ENCODE measurements at regions of chr5 and their contacts with region 1.

Region 1: GRCh38 chr5:93078082-93079038 is 502.7 kb downstream of the NR2F1-AS1 start:
- DNase-seq: peak; percentile 99
- ATAC-seq: peak; percentile 96
- H3K4me3 ChIP-seq: peak overlapping the region in 1 of 2 experiments; percentile 16; a peak in 2 of 4 replicates
- H3K27ac ChIP-seq: peak overlapping the region; percentile 98
- H3K4me1 ChIP-seq: peaks cover 40 to 41% of the 10 kb centered on the region in 2 experiments
- H3K27me3 ChIP-seq: no peaks in the 10 kb centered on the region
- CTCF ChIP-seq: no peak
- POLR2A ChIP-seq: no peak
- RAD21 ChIP-seq: peak; percentile 35

Region 2: DNA sequence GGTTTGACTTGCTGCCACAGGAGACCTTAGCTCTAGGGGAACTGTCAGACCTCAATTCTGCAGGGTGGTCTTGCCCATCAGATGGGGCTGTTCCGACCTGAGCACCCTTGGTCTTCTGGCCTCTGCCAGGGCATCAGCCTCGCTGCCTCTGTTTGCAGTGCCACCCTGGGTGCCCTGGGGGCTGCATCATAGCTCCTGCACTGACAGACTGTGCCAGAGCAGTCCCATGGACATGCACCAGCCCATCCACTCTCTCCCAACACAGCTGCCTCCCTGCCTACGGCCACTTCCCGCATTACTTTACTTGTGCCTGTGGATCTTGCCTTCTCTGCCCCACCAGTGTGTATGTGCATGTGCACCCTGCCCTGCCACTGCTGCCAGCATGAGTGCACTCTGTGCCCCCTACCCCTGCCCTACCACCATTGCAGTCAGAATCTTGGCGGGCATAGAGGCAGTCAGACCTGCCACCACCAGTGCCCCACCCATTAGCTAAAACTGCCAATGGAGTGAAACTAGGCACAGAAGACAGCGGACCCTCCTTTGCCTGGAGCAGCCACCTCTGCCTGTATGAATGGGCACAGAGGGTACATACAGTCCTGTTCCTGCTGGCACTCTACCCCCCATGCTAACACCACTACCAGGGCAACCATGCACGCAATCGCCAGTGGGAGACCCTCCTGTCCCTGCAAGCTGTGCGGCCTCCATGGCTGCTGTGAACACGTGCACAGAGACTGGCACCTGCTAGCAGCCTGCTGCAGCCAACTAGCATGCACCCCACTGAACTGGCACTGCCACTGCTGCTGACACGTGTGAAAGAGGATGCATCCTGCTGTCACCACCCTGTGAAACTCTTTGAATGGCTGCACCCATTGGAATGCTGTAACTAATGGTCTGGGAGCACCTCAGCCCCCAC is 810.3 kb before region 1 on chr5:
- CTCF ChIA-PET with region 1: no interaction called
- POLR2A ChIA-PET with region 1: no interaction called
- RAD21 ChIA-PET with region 1: no interaction called
- intact Hi-C with region 1: no loop called
- DNase-seq: no peak
- ATAC-seq: no peak
- H3K4me3 ChIP-seq: no peak overlapping the region
- H3K27ac ChIP-seq: no peak overlapping the region
- H3K4me1 ChIP-seq: no peaks in the 10 kb centered on the region
- H3K27me3 ChIP-seq: no peaks in the 10 kb centered on the region
- CTCF ChIP-seq: no peak
- POLR2A ChIP-seq: no peak
- RAD21 ChIP-seq: no peak

Region 3: DNA sequence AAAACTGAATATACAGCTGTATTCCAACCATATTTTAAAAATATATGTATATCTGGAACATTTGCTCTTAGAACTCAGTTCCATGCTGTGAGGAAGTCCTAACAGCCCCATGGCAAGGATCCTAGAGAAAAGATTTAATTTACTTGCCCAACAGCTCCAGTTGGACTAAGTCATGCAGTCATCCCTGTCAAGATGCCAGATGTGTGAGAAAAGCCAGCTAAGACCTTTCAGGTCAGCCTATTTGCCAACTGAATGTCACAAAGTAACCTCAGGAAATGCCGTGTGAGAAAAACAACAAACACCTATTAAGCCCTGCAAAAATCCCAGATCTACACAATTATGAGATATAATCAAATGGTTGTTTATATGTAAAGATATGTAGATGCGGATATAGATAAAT is 86.3 kb after region 1 on chr5:
- CTCF ChIA-PET with region 1: no interaction called
- POLR2A ChIA-PET with region 1: no interaction called
- RAD21 ChIA-PET with region 1: no interaction called
- intact Hi-C with region 1: loop called (anchors 1 kb)
- DNase-seq: peak; percentile 87
- ATAC-seq: 0 out of 2 replicates have a peak, but pooled peaks have one; percentile 28
- H3K4me3 ChIP-seq: no peak overlapping the region
- H3K27ac ChIP-seq: peak overlapping the region; percentile 95
- H3K4me1 ChIP-seq: peaks cover 55 to 62% of the 10 kb centered on the region in 2 experiments
- H3K27me3 ChIP-seq: no peaks in the 10 kb centered on the region
- CTCF ChIP-seq: no peak
- POLR2A ChIP-seq: no peak
- RAD21 ChIP-seq: peak; percentile 28

Region 4: DNA sequence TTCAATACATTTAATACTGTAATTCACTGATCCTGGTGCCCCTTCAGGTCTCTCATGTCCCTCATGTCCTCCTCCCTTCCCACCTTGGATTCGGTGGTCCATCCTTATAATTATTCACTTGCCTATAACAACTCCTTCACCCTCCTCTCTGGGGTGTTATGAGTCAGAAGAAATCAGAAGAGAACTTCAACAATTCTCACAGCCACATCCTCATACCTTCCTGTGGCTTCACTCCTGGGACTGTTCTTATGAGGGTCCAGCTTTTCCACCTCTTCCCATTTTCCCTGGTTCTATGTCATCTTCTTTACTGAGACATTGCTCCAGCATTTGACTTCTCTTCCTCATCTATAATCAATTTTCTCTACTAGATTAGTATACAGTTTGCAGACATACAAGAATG is 96.6 kb after region 1 on chr5:
- CTCF ChIA-PET with region 1: no interaction called
- POLR2A ChIA-PET with region 1: no interaction called
- RAD21 ChIA-PET with region 1: no interaction called
- intact Hi-C with region 1: no loop called
- DNase-seq: no peak
- ATAC-seq: no peak
- H3K4me3 ChIP-seq: no peak overlapping the region
- H3K27ac ChIP-seq: no peak overlapping the region
- H3K4me1 ChIP-seq: peaks cover 0 to 6% of the 10 kb centered on the region in 2 experiments; a peak in 1 of 4 replicates
- H3K27me3 ChIP-seq: no peaks in the 10 kb centered on the region
- CTCF ChIP-seq: no peak
- POLR2A ChIP-seq: no peak
- RAD21 ChIP-seq: no peak

Region 5: DNA sequence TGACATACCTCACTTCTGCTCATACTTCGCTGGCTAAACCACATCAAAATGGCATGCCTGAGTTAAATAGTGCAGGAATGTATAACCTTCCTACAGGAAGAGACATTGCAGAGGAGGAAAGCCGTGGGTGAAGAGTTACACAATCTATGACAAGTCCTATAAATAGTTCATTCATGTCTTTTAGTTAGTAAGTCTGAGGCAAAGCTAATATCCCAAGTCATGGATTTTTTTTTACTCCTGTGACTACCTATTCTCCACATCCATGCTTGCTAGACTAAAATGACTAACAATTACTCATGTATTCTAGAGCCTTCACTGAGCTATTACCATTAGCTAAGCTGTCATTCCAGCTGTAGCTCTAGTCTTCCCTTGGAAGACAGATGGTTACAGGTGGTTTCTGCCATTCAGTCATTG is 111.4 kb after region 1 on chr5:
- CTCF ChIA-PET with region 1: no interaction called
- POLR2A ChIA-PET with region 1: no interaction called
- RAD21 ChIA-PET with region 1: no interaction called
- intact Hi-C with region 1: loop called (anchors 10 kb)
- DNase-seq: peak; percentile 78
- ATAC-seq: peak; percentile 58
- H3K4me3 ChIP-seq: peak overlapping the region in 1 of 2 experiments; percentile 5; a peak in 1 of 4 replicates
- H3K27ac ChIP-seq: peak overlapping the region; percentile 92
- H3K4me1 ChIP-seq: peaks cover 72 to 88% of the 10 kb centered on the region in 2 experiments
- H3K27me3 ChIP-seq: no peaks in the 10 kb centered on the region
- CTCF ChIP-seq: no peak
- POLR2A ChIP-seq: no peak
- RAD21 ChIP-seq: no peak; the same call in 1 of the 2 replicates

Region 6: GRCh38 chr5:93359296-93359958 is 281.1 kb after region 1 on chr5:
- CTCF ChIA-PET with region 1: no interaction called
- POLR2A ChIA-PET with region 1: no interaction called
- RAD21 ChIA-PET with region 1: no interaction called
- intact Hi-C with region 1: loop called (anchors 1 kb)
- DNase-seq: peak; percentile 90
- ATAC-seq: peak; percentile 93
- H3K4me3 ChIP-seq: peak overlapping the region; percentile 33 to 52
- H3K27ac ChIP-seq: peak overlapping the region; percentile 75
- H3K4me1 ChIP-seq: peaks cover 19 to 37% of the 10 kb centered on the region in 2 experiments
- H3K27me3 ChIP-seq: no peaks in the 10 kb centered on the region
- CTCF ChIP-seq: no peak
- POLR2A ChIP-seq: no peak
- RAD21 ChIP-seq: peak; percentile 18; the same call in 1 of the 2 replicates

Region 7: DNA sequence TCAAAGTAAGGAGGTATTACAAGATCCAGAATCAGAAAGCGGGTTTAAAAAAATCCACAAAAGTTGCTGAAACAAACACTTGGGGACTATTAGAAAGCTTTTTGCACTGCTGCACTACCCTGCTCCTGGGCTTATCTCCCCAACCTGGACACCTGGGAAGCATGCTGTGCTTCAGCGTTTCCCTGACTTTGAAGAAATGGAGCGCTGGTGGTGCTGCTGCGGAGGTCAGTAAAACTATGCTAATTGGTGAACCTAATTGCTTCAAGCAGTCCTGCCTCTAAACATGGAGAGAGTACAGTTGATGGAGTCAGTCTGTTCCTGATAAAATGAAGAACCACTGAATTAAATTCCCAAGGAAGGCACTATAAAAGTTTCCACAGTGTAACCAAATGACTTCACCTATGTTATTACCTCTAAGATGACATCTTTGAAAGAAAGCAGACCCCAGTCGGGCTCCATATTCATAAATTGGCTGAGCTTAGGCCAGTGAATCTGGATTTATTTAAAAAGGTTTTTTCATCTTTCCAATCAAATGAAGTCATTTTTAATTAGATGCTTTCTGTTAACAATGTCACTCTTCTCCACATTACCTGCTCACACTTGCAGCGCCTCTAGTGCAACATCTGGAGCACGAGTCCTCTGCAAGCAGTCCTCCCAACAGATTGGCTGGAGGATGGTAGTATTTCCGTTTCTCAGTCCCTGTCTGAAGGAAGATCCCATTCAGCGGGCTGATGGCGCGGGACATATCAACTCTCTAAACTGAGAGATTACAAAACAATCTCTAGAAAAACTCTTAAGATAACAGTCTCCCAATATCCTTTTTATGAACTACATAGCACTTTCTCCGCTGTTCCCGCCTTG is 491.2 kb after region 1 on chr5:
- CTCF ChIA-PET with region 1: no interaction called
- POLR2A ChIA-PET with region 1: no interaction called
- RAD21 ChIA-PET with region 1: no interaction called
- intact Hi-C with region 1: loop called (anchors 5 kb)
- DNase-seq: no peak
- ATAC-seq: no peak
- H3K4me3 ChIP-seq: no peak overlapping the region
- H3K27ac ChIP-seq: no peak overlapping the region; the same call in 1 of the 2 replicates
- H3K4me1 ChIP-seq: peaks cover 10 to 37% of the 10 kb centered on the region in 2 experiments
- H3K27me3 ChIP-seq: no peaks in the 10 kb centered on the region
- CTCF ChIP-seq: no peak
- POLR2A ChIP-seq: no peak
- RAD21 ChIP-seq: no peak

Region 8: DNA sequence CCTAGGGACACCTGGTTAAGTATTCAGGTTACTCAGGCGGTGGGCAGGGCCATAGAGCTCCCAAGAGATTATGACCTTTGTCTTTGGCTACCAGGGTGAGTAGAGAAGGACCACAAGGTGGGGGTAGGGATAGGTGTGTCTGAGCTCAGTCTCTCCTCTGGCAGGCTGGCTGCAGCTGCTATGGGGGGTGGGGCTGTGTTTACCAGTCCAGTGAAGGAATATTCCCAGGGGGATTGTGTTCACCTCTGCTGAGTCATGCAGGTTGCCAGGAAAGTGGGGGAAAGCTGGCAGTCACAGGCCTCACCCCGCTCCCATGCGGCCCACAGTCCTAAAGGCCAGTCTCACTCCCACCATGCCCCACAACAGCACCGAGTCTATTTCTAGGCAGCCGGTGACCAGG is 716.6 kb after region 1 on chr5:
- CTCF ChIA-PET with region 1: no interaction called
- POLR2A ChIA-PET with region 1: no interaction called
- RAD21 ChIA-PET with region 1: no interaction called
- intact Hi-C with region 1: loop called (anchors 5 kb)
- DNase-seq: no peak
- ATAC-seq: no peak
- H3K4me3 ChIP-seq: no peak overlapping the region
- H3K27ac ChIP-seq: no peak overlapping the region
- H3K4me1 ChIP-seq: peaks cover 9 to 11% of the 10 kb centered on the region in 2 experiments; a peak in 3 of 4 replicates
- H3K27me3 ChIP-seq: no peaks in the 10 kb centered on the region
- CTCF ChIP-seq: no peak
- POLR2A ChIP-seq: no peak
- RAD21 ChIP-seq: no peak